Heart left ventricle (tissue), 16 donors: ENCODE measurements at regions of chr10 and their contacts with region 1.

Region 1: GRCh38 chr10:91389636-91390512 is 20.3 kb upstream of the HECTD2 start:
- DNase-seq: no peak
- ATAC-seq: peak in 3 of 4 donors; percentile 59 to 73 (median 73)
- H3K4me3 ChIP-seq: peak overlapping the region in 2 of 12 donors; percentile 21 to 39
- H3K27ac ChIP-seq: peak overlapping the region in 1 of 12 donors; percentile 32
- H3K4me1 ChIP-seq: peaks cover 0 to 5% (median 0%) of the 10 kb centered on the region in 12 donors
- H3K27me3 ChIP-seq: no peaks in the 10 kb centered on the region
- CTCF ChIP-seq: peak; percentile 64 to 82 (median 74)
- POLR2A ChIP-seq: no peak

Region 2: GRCh38 chr10:90871766-90872647 is 517.9 kb before region 1 on chr10 and contains the start of gene RPP30:
- intact Hi-C with region 1: loop called in 1 of 10 experiments (anchors 10 kb)
- DNase-seq: peak; percentile 83 to 92 (median 86)
- ATAC-seq: peak; percentile 97 to 99 (median 98)
- H3K4me3 ChIP-seq: peak within 1 kb of the TSS; percentile 66 to 98 (median 80)
- H3K27ac ChIP-seq: peak within 1 kb of the TSS; percentile 24 to 78 (median 64)
- H3K4me1 ChIP-seq: peaks cover 0 to 27% (median 14%) of the 10 kb centered on the region in 12 donors
- H3K27me3 ChIP-seq: no peaks in the 10 kb centered on the region
- CTCF ChIP-seq: no peak
- POLR2A ChIP-seq: peak in 1 of 2 donors; percentile 21
- total RNA-seq, gene RPP30: 26.4 to 39.9 (median 29.7) TPM

Region 3: DNA sequence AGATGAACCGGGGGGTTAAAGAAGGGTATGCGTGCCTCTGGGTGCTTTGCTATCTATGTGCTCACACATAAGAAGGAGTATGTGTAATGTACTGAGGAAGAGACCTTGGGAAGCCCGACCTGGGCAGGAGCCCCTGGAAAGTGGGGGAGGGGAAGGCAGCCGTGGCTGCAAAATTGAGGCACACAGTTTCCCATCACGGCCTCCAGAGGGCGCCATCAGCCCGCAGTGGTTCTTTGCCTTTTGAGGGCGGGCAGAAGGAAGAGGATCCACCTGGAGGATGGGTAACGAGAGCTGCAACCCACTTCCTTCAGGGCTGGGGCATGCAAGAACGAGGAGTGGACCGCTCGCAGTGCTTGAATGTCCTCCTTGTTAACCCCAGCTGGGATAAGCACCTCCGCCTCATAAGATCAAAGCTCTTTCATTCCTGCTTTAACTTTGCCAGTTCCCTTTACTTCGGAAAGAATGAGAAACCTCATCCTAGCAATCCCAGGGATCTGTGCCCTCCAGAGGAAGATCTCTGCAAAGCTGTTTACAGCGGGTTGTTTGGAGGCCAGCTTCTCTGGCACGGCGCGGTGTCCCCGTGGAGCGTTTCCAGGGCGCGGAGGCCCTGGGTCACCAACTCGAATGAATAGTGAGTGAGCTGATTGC is 91.5 kb before region 1 on chr10:
- intact Hi-C with region 1: loop called in 2 of 10 experiments (anchors 5 kb)
- DNase-seq: peak; percentile 62 to 84 (median 69)
- ATAC-seq: peak; percentile 74 to 89 (median 88)
- H3K4me3 ChIP-seq: peak overlapping the region in 11 of 12 donors; percentile 6 to 62 (median 47)
- H3K27ac ChIP-seq: peak overlapping the region in 2 of 12 donors; percentile 37
- H3K4me1 ChIP-seq: peaks cover 0 to 10% (median 4%) of the 10 kb centered on the region in 12 donors
- H3K27me3 ChIP-seq: peaks cover 0 to 5% (median 0%) of the 10 kb centered on the region in 9 donors
- CTCF ChIP-seq: peak; percentile 81 to 96 (median 93)
- POLR2A ChIP-seq: no peak

Region 4: GRCh38 chr10:91551856-91552255 is 162.0 kb after region 1 on chr10:
- intact Hi-C with region 1: loop called in 3 of 10 experiments (anchors 5 to 10 kb)
- DNase-seq: peak in 4 of 5 donors; percentile 49 to 66 (median 54)
- ATAC-seq: peak; percentile 72 to 87 (median 81)
- H3K4me3 ChIP-seq: peak overlapping the region in 8 of 12 donors; percentile 21 to 49 (median 33)
- H3K27ac ChIP-seq: peak overlapping the region in 6 of 12 donors; percentile 18 to 73 (median 44)
- H3K4me1 ChIP-seq: peaks cover 0 to 21% (median 4%) of the 10 kb centered on the region in 12 donors
- H3K27me3 ChIP-seq: no peaks in the 10 kb centered on the region
- CTCF ChIP-seq: peak; percentile 39 to 86 (median 65)
- POLR2A ChIP-seq: no peak

Region 5: GRCh38 chr10:91745074-91745832 is 355.4 kb after region 1 on chr10:
- intact Hi-C with region 1: loop called in 1 of 10 experiments (anchors 10 kb)
- DNase-seq: peak in 2 of 5 donors; percentile 28
- ATAC-seq: peak in 3 of 4 donors; percentile 56 to 80 (median 65)
- H3K4me3 ChIP-seq: no peak overlapping the region
- H3K27ac ChIP-seq: no peak overlapping the region
- H3K4me1 ChIP-seq: peaks cover 0 to 5% (median 0%) of the 10 kb centered on the region in 12 donors
- H3K27me3 ChIP-seq: peaks cover 0 to 14% (median 0%) of the 10 kb centered on the region in 9 donors
- CTCF ChIP-seq: peak in 5 of 12 donors; percentile 16 to 42 (median 26)
- POLR2A ChIP-seq: no peak

Region 6: GRCh38 chr10:91908337-91909116 is 518.7 kb after region 1 on chr10:
- intact Hi-C with region 1: loop called in 2 of 10 experiments (anchors 2 to 10 kb)
- DNase-seq: peak; percentile 70 to 87 (median 82)
- ATAC-seq: peak; percentile 91 to 97 (median 97)
- H3K4me3 ChIP-seq: peak overlapping the region; percentile 55 to 94 (median 80)
- H3K27ac ChIP-seq: peak overlapping the region in 11 of 12 donors; percentile 64 to 83 (median 79)
- H3K4me1 ChIP-seq: peaks cover 0 to 23% (median 8%) of the 10 kb centered on the region in 12 donors
- H3K27me3 ChIP-seq: peaks cover 0 to 4% (median 0%) of the 10 kb centered on the region in 9 donors
- CTCF ChIP-seq: peak; percentile 14 to 74 (median 40)
- POLR2A ChIP-seq: no peak

Region 7: DNA sequence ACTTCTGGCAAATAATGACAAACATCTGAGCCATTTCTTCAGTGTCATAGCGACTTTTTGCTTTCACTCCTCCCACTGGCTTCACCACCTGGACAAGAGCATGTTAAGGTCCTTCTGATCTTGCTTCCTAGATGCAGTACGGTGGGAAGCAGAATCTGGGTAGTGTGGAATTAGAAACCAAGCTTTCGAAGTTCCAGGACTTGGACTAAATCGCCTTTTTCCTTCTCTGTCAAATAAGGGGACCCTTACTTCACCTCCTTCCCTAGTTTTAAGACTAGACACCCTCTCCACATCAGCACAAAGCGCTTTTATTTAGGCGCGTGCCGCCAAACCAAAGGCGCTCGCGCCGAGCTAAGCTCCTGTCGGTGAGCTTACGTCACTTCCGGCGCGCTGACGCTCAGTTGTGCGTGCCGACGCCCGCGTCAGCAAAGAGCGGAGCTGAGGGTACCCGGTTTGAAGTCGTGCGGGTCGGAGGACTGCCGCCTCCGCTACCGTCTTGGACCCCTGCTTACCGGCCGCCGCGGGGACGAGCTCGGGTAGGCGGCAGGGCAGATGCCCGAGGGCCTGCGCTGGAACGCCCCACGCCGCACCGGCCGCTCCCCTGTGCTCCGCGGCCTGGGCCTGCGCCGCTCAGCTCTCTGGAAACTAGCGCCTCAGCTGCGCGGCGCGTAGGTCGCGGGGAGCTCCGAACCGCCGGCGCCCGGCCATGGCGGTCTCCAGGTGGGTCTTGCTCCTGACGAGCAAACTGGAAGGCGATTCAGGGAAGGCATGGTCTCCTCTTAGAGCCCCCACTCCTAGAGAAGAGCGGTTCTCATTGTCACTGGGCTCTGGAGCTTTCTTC is 533.7 kb after region 1 on chr10 and contains the start of gene BTAF1:
- intact Hi-C with region 1: loop called in 2 of 10 experiments (anchors 10 kb)
- DNase-seq: peak; percentile 91 to 97 (median 95)
- ATAC-seq: peak; percentile 99 to 100 (median 100)
- H3K4me3 ChIP-seq: peak within 1 kb of the TSS; percentile 56 to 95 (median 88)
- H3K27ac ChIP-seq: peak within 1 kb of the TSS; percentile 76 to 99 (median 95)
- H3K4me1 ChIP-seq: peaks cover 0 to 36% (median 26%) of the 10 kb centered on the region in 12 donors
- H3K27me3 ChIP-seq: peaks cover 0 to under 1% (median 0%) of the 10 kb centered on the region in 9 donors
- CTCF ChIP-seq: peak in 1 of 12 donors; percentile 16
- POLR2A ChIP-seq: peak; percentile 31 to 90
- total RNA-seq, gene BTAF1: 10.9 to 22.3 (median 12.0) TPM